HEK293T (cell line): ENCODE measurements at regions of chr1 and their contacts with region 1.

Region 1: DNA sequence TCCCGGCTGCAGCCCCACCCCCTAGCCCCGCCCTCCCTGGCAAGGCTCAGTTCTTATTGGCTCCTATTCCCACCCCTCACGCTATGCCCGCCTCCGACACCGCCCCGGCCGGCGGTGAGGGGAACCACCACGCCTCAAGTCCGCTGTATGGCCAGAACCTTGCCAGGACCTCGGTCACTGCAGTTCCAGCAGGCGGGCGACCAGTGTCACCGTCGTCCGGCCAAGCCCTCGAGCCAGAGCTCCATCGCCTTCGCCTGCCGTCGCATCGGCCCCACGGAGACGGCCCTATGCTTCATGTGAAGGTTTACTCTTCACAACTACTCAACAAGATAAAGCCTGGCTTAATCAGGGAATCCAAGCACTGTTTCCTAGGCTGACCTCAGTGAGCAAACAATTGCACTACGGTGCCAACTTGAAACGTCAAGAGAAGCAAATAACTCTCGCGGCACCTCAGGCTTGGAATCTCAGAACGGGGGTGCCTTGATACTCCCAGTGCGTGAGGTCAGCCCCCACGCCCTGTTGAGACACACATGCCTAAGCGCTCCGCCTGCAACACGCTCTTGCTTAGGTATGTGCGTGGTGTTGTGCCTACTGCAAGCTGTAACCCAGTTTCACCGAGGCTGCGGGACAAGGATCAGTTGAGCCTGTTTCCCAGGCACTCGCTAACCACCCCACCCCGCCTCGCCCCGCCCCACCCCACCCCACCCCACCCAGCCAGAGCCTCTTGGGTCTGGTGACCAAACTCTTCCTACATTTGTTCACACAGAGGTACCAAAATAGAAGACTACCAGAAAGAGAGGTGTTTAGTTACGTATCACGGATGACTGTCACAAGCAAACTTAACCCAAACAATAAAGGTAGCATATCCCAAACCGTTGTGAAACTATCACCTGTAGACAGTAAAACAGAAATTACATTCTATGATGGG is 498 bp upstream of the DENND2C start:
- DNase-seq: peak; percentile 99

Region 2: DNA sequence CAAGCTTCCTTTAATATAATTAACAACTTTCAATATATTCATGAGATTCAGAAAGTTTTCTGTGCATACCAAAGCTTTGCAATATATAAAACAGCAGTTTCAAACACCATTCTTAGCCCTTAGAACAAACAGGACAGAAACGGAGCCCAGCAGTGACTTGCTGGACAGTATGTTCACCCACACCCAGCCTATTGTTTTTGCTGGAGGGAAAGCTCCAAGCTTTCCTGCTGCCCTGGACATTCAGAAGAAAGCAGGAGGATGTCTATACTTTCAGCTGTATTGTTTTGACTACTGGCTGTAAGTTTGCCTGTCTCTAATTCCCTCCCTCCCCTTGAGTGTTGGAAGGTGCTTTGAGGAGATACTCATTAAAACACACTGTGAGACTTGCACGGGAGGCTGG is 10.1 kb before region 1 on chr1:
- CTCF ChIA-PET with region 1: interaction called, 3 read pairs
- POLR2A ChIA-PET with region 1: interaction called, 13 read pairs
- DNase-seq: no peak